ENCODE measurements at regions of chr22 and their contacts with region 1.

Region 1: GRCh38 chr22:29886596-29886995 is 3.6 kb downstream of the MTMR3 start:
- DNase-seq: no peak
- H3K4me3 ChIP-seq: no peak overlapping the region
- H3K4me3 Mint-ChIP-seq: no peak overlapping the region
- H3K27ac ChIP-seq: no peak overlapping the region
- H3K27ac Mint-ChIP-seq: no peak overlapping the region
- H3K4me1 ChIP-seq: peaks cover 34% of the 10 kb centered on the region
- H3K4me1 Mint-ChIP-seq: peaks cover 21 to 23% (median 22%) of the 10 kb centered on the region in 3 donors
- H3K27me3 ChIP-seq: no peaks in the 10 kb centered on the region
- H3K27me3 Mint-ChIP-seq: no peaks in the 10 kb centered on the region

Region 2: DNA sequence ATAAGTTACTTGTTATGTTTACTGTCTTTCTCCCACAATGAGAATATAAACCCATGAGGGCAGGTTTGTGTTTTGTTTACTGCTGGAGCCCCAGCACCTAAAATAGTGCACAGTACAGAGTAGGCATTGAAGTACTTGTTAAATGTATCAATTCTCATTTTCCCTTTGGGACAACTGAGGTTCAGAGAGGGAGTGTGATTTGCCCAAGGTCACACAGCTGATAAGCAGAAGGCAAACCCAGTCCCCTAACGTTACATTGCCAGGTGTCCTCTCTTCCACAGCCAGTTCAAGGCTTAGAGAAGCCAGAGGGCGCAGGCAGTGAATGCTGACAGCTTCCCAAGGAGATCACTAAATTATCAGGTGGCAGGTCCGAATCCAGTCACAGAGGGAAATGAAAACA is 136.6 kb before region 1 on chr22:
- CTCF ChIA-PET with region 1: no interaction called
- POLR2A ChIA-PET with region 1: interaction called, 12 read pairs
- DNase-seq: no peak
- H3K4me3 ChIP-seq: no peak overlapping the region
- H3K4me3 Mint-ChIP-seq: no peak overlapping the region
- H3K27ac ChIP-seq: no peak overlapping the region
- H3K27ac Mint-ChIP-seq: peak overlapping the region in 3 of 8 donors; percentile 29 to 90 (median 81)
- H3K4me1 ChIP-seq: peaks cover 12% of the 10 kb centered on the region
- H3K4me1 Mint-ChIP-seq: peaks cover 19 to 26% (median 23%) of the 10 kb centered on the region in 3 donors
- H3K27me3 ChIP-seq: no peaks in the 10 kb centered on the region
- H3K27me3 Mint-ChIP-seq: no peaks in the 10 kb centered on the region

Region 3: DNA sequence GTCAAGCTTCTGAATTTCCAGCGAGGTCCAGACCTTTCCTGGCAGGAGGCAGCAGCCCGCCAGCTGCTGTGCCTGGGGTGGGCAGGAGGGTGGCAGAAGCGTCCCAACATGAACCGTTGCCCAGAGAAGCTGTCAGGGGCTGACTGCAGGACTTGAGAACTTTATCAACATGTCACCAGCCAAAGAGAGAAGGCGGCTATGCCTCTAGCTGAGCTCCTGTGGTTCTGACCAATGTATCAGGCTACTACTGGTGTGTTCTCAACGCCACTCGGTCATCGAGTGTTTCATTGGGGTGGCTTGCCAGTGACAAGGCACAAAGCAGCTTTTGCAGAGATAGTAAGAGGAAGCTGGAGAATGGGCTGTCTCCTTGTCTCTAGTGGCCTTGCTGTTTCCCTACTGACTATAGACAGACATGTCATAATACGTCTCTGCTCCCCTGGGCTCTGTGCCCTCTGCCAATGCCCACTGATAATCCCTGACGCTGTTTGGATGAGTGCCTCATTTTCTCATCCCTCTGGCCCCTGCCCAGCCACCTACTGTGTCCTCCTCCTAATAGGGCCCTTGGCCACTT is 30.9 kb before region 1 on chr22:
- CTCF ChIA-PET with region 1: no interaction called
- POLR2A ChIA-PET with region 1: no interaction called
- DNase-seq: no peak
- H3K4me3 ChIP-seq: no peak overlapping the region
- H3K4me3 Mint-ChIP-seq: no peak overlapping the region
- H3K27ac ChIP-seq: no peak overlapping the region
- H3K27ac Mint-ChIP-seq: peak overlapping the region in 1 of 8 donors; percentile 51
- H3K4me1 ChIP-seq: no peaks in the 10 kb centered on the region
- H3K4me1 Mint-ChIP-seq: no peaks in the 10 kb centered on the region
- H3K27me3 ChIP-seq: no peaks in the 10 kb centered on the region
- H3K27me3 Mint-ChIP-seq: peaks cover 0 to 8% of the 10 kb centered on the region in 2 donors

Region 4: DNA sequence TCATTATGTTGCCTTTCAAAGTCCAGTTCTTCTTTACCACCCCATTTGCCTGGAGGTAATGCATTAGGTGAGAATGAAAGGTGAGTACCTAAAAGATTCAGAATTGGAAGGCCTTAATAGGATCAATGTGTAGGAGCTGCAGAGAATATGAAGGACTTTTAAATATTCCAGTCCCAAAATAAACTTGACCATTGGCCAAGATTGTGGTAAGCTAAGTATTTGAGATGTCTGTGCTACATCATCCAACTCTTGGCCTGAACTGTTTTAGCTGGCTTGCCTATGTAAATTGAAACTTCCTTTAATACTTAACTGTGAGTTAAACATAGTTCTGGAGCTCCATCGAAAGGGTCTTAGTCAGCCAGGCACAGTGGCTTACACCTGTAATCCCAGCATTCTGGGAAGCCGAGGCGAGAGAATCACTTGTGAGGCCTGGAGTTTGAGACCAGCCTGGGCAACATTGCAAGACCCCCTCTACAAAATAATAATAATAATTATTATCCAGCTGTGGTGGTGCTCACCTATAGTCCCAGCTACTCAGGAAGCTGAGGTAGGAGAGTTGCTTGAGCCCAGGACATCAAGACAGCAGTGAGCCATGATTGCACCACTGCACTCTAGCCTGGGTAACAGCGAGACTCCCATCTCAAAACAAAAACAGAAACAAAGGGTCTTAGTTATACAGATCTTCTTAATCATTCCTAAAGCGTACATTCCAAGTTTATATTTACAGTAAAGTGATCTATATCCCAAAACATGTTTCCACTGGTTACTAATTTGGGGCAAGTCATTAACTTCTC is 26.2 kb after region 1 on chr22:
- CTCF ChIA-PET with region 1: no interaction called
- POLR2A ChIA-PET with region 1: no interaction called
- DNase-seq: no peak
- H3K4me3 ChIP-seq: no peak overlapping the region
- H3K4me3 Mint-ChIP-seq: no peak overlapping the region
- H3K27ac ChIP-seq: no peak overlapping the region
- H3K27ac Mint-ChIP-seq: peak overlapping the region in 1 of 8 donors; percentile 32
- H3K4me1 ChIP-seq: peaks cover 11% of the 10 kb centered on the region
- H3K4me1 Mint-ChIP-seq: peaks cover 57 to 87% (median 83%) of the 10 kb centered on the region in 3 donors
- H3K27me3 ChIP-seq: no peaks in the 10 kb centered on the region
- H3K27me3 Mint-ChIP-seq: no peaks in the 10 kb centered on the region

Measured in CD8-positive, alpha-beta memory T cell (primary cell).